Ovary (tissue), 10 donors: ENCODE measurements at regions of chr17 and their contacts with region 1.

Region 1: GRCh38 chr17:64385187-64386083 is 5.2 kb downstream of the PECAM1 start:
- DNase-seq: peak; percentile 86 to 97 (median 90)
- H3K4me3 ChIP-seq: peak overlapping the region; percentile 19
- H3K27ac ChIP-seq: peak overlapping the region; percentile 86 to 88
- H3K4me1 ChIP-seq: peaks cover 18% of the 10 kb centered on the region
- H3K27me3 ChIP-seq: no peaks in the 10 kb centered on the region
- CTCF ChIP-seq: no peak
- EP300 ChIP-seq: peak; percentile 78
- POLR2A ChIP-seq: peak; percentile 49

Region 2: GRCh38 chr17:64320613-64321553 is 64.6 kb before region 1 on chr17:
- intact Hi-C with region 1: loop called in 1 of 4 experiments (anchors 10 kb)
- DNase-seq: peak; percentile 63 to 85 (median 68)
- H3K4me3 ChIP-seq: no peak overlapping the region
- H3K27ac ChIP-seq: no peak overlapping the region
- H3K4me1 ChIP-seq: peaks cover 3% of the 10 kb centered on the region
- H3K27me3 ChIP-seq: no peaks in the 10 kb centered on the region
- CTCF ChIP-seq: peak; percentile 81 to 93 (median 82)
- EP300 ChIP-seq: no peak
- POLR2A ChIP-seq: no peak

Region 3: DNA sequence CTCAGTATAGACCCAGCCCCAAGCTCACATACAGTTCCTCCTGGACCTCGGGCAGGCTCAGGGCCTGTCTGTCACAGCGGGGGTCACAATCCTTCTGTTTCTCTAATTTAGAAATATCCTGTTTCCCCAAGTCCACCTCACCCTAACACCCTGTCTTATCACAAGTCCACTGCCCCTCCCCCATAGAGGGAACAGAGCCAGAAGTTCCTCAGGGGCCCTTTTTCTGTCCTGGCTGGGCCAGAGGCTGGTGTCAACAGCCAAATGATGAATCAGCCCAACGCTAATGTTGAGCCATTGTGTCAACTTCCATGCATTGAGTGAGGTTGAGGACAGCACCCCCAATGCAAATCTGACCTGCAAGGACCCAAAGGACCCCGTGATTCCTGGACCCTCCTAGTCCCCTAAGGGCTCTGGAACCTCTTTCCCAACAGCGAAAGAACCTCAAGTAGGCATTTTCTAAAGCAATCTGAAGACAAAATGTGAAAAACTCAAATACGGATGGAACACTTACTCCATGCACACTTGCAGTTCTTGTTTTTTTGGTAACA is 53.4 kb before region 1 on chr17:
- intact Hi-C with region 1: loop called in 2 of 4 experiments (anchors 5 to 10 kb)
- DNase-seq: peak in 2 of 5 donors; percentile 59 to 73
- H3K4me3 ChIP-seq: no peak overlapping the region
- H3K27ac ChIP-seq: peak overlapping the region; percentile 1 to 27
- H3K4me1 ChIP-seq: peaks cover 27% of the 10 kb centered on the region
- H3K27me3 ChIP-seq: no peaks in the 10 kb centered on the region
- CTCF ChIP-seq: no peak
- EP300 ChIP-seq: no peak
- POLR2A ChIP-seq: no peak